ENCODE measurements at regions of chr13 and their contacts with region 1.

Region 1: DNA sequence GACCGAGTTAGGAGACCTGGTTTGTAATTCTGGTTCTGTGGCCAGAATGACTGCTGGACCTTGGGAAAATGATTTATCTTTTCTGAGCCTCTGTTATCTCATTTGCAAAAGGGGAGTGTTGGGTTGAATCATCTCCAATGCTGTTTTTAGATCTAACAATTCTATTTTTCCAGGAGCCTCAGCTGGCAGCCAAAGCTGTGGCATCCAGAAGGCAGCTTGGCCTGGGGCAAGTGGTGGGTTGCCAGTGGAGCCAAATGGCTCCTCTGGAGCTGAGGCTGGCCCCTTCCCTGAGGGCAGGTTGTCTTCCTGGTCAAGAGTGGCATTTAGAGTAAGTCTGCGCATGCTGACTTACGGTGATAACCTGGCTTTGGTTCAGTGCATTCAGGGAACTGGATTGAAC is 21.3 kb downstream of the B3GLCT start:
- DNase-seq: no peak
- H3K4me3 ChIP-seq: no peak overlapping the region
- H3K27ac ChIP-seq: no peak overlapping the region
- H3K4me1 ChIP-seq: no peaks in the 10 kb centered on the region
- H3K27me3 ChIP-seq: no peaks in the 10 kb centered on the region
- CTCF ChIP-seq: no peak
- POLR2A ChIP-seq: no peak

Region 2: GRCh38 chr13:31131470-31131961 is 89.5 kb before region 1 on chr13:
- intact Hi-C with region 1: no loop called
- DNase-seq: no peak
- H3K4me3 ChIP-seq: no peak overlapping the region
- H3K27ac ChIP-seq: no peak overlapping the region
- H3K4me1 ChIP-seq: no peaks in the 10 kb centered on the region
- H3K27me3 ChIP-seq: no peaks in the 10 kb centered on the region
- CTCF ChIP-seq: no peak
- POLR2A ChIP-seq: no peak

Region 3: GRCh38 chr13:31234729-31235128 is 13.7 kb after region 1 on chr13:
- intact Hi-C with region 1: loop called (anchors 1 kb)
- DNase-seq: no peak
- H3K4me3 ChIP-seq: no peak overlapping the region
- H3K27ac ChIP-seq: no peak overlapping the region
- H3K4me1 ChIP-seq: no peaks in the 10 kb centered on the region
- H3K27me3 ChIP-seq: no peaks in the 10 kb centered on the region
- CTCF ChIP-seq: no peak
- POLR2A ChIP-seq: no peak

Measured in breast epithelium (tissue), 4 donors.